B cell (primary cell): ENCODE measurements at regions of chr11 and their contacts with region 1.

Region 1: GRCh38 chr11:66579017-66579606 is 10.7 kb upstream of the CTSF start:
- DNase-seq: peak; percentile 85
- ATAC-seq: peak; percentile 91
- H3K4me3 ChIP-seq: peak overlapping the region in 2 of 5 experiments; percentile 1 to 12
- H3K4me3 Mint-ChIP-seq: peak overlapping the region; percentile 18
- H3K27ac ChIP-seq: no peak overlapping the region
- H3K27ac Mint-ChIP-seq: no peak overlapping the region
- H3K4me1 ChIP-seq: peaks cover 3 to 7% of the 10 kb centered on the region in 2 donors
- H3K4me1 Mint-ChIP-seq: peaks cover 8% of the 10 kb centered on the region
- H3K27me3 ChIP-seq: no peaks in the 10 kb centered on the region
- H3K27me3 Mint-ChIP-seq: peaks cover 24% of the 10 kb centered on the region
- CTCF ChIP-seq: peak; percentile 84

Region 2: GRCh38 chr11:66568124-66568916 is 10.8 kb before region 1 on chr11 and contains the start of gene CTSF:
- CTCF ChIA-PET with region 1: interaction called, 11 read pairs
- POLR2A ChIA-PET with region 1: no interaction called
- intact Hi-C with region 1: no loop called
- DNase-seq: peak; percentile 74
- ATAC-seq: peak; percentile 96
- H3K4me3 ChIP-seq: peak within 1 kb of the TSS in 4 of 5 experiments; percentile 37 to 69 (median 58)
- H3K4me3 Mint-ChIP-seq: peak within 1 kb of the TSS; percentile 86
- H3K27ac ChIP-seq: no peak within 1 kb of the TSS
- H3K27ac Mint-ChIP-seq: peak within 1 kb of the TSS; percentile 65
- H3K4me1 ChIP-seq: peaks cover 9 to 11% of the 10 kb centered on the region in 2 donors
- H3K4me1 Mint-ChIP-seq: peaks cover 10% of the 10 kb centered on the region
- H3K27me3 ChIP-seq: peaks cover 0 to 22% (median 3%) of the 10 kb centered on the region in 4 experiments
- H3K27me3 Mint-ChIP-seq: peaks cover 9% of the 10 kb centered on the region
- CTCF ChIP-seq: no peak
- total RNA-seq, gene CTSF: 20.9 and 24.0 TPM in 2 replicates

Region 3: GRCh38 chr11:66616379-66617154 is 37.5 kb after region 1 on chr11 and contains the start of gene RBM14:
- CTCF ChIA-PET with region 1: interaction called, 9 read pairs
- POLR2A ChIA-PET with region 1: interaction called, 3 read pairs
- intact Hi-C with region 1: loop called (anchors 1 kb)
- DNase-seq: peak; percentile 99
- ATAC-seq: peak; percentile 89
- H3K4me3 ChIP-seq: peak within 1 kb of the TSS; percentile 75 to 97 (median 94)
- H3K4me3 Mint-ChIP-seq: peak within 1 kb of the TSS; percentile 99
- H3K27ac ChIP-seq: peak within 1 kb of the TSS; percentile 85 to 90
- H3K27ac Mint-ChIP-seq: peak within 1 kb of the TSS; percentile 99
- H3K4me1 ChIP-seq: peaks cover 53 to 65% of the 10 kb centered on the region in 2 donors
- H3K4me1 Mint-ChIP-seq: peaks cover 59% of the 10 kb centered on the region
- H3K27me3 ChIP-seq: no peaks in the 10 kb centered on the region
- H3K27me3 Mint-ChIP-seq: no peaks in the 10 kb centered on the region
- CTCF ChIP-seq: no peak
- total RNA-seq, gene RBM14: 244 and 246 TPM in 2 replicates

Region 4: DNA sequence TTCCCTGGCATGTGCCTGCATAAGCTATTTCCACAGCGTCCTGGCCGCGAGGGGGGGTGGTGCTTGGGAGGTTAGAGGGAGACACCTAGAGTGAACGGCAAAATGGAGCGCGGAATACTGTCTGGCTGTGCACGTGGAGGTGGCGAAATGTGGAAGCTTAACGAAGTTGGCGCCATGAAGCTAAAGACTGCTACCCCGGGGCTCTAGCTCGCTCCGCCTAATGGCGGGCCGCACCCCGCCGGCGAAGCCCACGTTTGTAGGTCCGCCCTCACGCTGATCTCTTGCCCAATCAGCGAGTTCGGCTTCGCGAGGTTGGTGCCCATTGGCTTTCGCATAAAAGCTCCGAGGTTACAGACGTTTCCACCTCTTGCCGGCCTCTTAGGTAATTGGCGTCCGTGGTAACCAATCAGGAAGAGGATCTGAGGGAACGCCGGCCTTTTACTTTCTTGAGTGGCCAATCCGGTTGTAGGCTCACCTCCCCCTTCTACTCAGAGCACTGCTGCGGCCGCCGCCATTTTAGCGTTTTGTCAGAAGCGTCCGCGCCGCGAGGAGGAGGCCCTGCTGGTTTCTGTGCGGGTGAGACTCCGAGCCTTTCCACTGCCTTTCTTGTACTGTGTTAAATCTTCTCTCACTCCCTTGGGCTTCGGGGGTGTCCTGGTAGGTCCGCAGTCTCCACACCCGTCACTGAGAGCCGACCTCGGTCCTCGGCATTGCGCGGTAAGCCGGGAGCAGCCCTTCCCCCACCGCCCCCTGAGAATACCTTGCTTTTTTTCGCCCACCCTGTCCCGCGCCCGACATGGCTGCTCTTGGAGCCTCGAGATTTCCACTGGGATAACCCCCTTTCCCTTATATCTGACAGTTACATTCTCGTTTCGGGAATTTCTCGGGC is 59.3 kb after region 1 on chr11 and contains the start of gene RBM4:
- CTCF ChIA-PET with region 1: interaction called, 7 read pairs
- POLR2A ChIA-PET with region 1: no interaction called
- intact Hi-C with region 1: loop called (anchors 2 kb)
- DNase-seq: peak; percentile 99
- ATAC-seq: peak; percentile 92
- H3K4me3 ChIP-seq: peak within 1 kb of the TSS; percentile 79 to 95 (median 88)
- H3K4me3 Mint-ChIP-seq: peak within 1 kb of the TSS; percentile 99
- H3K27ac ChIP-seq: peak within 1 kb of the TSS; percentile 77 to 87
- H3K27ac Mint-ChIP-seq: peak within 1 kb of the TSS; percentile 96
- H3K4me1 ChIP-seq: peaks cover 49 to 54% of the 10 kb centered on the region in 2 donors
- H3K4me1 Mint-ChIP-seq: peaks cover 63% of the 10 kb centered on the region
- H3K27me3 ChIP-seq: no peaks in the 10 kb centered on the region
- H3K27me3 Mint-ChIP-seq: no peaks in the 10 kb centered on the region
- CTCF ChIP-seq: peak; percentile 10
- total RNA-seq, gene RBM4: 199 and 203 TPM in 2 replicates

Region 5: DNA sequence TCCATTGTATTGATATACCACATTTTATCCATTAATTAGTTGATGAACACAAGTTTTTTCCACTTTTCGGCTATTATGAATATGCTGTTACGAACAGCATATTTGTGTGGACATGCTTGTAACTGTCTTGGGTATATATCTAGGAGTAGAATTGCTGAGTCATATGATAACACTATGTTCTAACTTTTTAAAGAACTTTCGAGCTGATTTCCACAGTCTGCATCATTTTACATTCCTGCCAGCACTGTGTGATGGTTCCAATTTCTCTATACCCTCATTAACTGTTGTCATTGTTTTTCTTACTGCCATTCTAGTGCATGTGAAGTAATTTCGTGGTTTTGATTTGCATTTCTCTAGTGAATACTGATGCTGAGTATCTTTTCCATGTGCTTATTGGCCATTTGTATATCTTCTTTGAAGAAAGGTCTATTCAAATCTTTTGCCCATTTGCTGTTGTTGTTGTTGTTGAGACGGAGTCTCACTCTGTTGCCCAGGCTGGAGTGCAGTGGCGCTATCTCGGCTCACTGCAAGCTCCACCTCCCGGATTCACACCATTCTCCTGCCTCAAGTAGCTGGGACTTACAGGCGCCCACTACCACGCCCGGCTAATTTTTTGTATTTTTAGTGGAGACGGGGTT is 256.8 kb after region 1 on chr11:
- CTCF ChIA-PET with region 1: interaction called, 6 read pairs
- POLR2A ChIA-PET with region 1: no interaction called
- intact Hi-C with region 1: loop called (anchors 1 kb)
- DNase-seq: no peak
- ATAC-seq: no peak
- H3K4me3 ChIP-seq: no peak overlapping the region
- H3K4me3 Mint-ChIP-seq: no peak overlapping the region
- H3K27ac ChIP-seq: no peak overlapping the region
- H3K27ac Mint-ChIP-seq: peak overlapping the region; percentile 15
- H3K4me1 ChIP-seq: peaks cover 6 to 18% of the 10 kb centered on the region in 2 donors
- H3K4me1 Mint-ChIP-seq: peaks cover 32% of the 10 kb centered on the region
- H3K27me3 ChIP-seq: no peaks in the 10 kb centered on the region
- H3K27me3 Mint-ChIP-seq: no peaks in the 10 kb centered on the region
- CTCF ChIP-seq: no peak